Activated T-helper 1 cell treated with anti-CD3 and anti-CD28 coated beads, Interleukin-12 subunit alpha, Interleukin-12 subunit beta, Interleukin-2, Interleukin-4 antibody, amounts not matched to agents 30 ng/mL and 10 ng/mL and 1 ng/mL, durations not matched to agents 14 hours and 24 hours and 36 hours (primary cell): ENCODE measurements at regions of chr10 and their contacts with region 1.

Region 1: GRCh38 chr10:93376372-93377293 is 105.5 kb downstream of the MYOF start:
- DNase-seq: peak; percentile 46
- H3K4me3 Mint-ChIP-seq: no peak overlapping the region
- H3K27ac Mint-ChIP-seq: no peak overlapping the region
- H3K4me1 Mint-ChIP-seq: peaks cover 32% of the 10 kb centered on the region
- H3K27me3 Mint-ChIP-seq: no peaks in the 10 kb centered on the region

Region 2: GRCh38 chr10:92208736-92209327 is 1167.8 kb before region 1 on chr10:
- intact Hi-C with region 1: loop called (anchors 5 kb)
- DNase-seq: no peak
- H3K4me3 Mint-ChIP-seq: no peak overlapping the region
- H3K27ac Mint-ChIP-seq: no peak overlapping the region
- H3K4me1 Mint-ChIP-seq: peaks cover 20% of the 10 kb centered on the region
- H3K27me3 Mint-ChIP-seq: no peaks in the 10 kb centered on the region

Region 3: DNA sequence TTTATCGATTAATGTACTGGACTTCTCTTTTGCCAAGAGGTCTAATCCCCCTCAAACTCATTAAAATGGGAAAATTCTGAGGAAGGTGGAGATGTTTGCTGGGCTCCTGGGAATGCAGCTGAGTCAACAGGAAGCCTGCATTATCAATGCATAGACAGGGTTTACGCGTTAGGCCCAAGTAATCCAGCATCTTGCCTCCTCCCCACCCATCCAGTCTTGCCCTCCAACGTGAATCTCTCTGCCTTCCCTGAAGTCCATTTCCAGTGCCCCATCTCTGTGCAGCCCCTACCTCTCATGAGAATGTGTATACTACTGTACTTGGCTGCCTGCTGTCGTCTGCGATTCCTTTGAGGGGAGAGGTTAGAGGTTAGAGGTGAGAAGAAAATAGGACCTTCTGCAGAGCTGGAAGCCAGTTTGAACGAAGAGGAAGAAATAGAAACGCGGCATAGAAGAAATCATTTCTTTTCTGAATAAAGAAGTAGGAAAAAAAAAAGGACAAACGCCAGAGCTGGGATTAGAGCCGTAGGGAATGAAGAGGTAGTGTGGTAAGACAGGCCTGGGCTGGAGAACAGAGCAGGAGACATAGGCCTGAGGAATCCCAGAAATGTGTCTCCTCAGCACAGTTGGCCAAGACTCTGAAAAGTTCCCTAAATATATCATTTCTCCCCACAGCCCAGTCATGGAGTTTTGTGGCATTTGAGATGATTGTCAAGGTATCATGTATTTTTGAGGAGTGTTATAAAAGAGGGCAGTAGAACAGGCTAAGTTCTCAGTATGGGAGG is 29.9 kb after region 1 on chr10:
- intact Hi-C with region 1: no loop called
- DNase-seq: no peak
- H3K4me3 Mint-ChIP-seq: no peak overlapping the region
- H3K27ac Mint-ChIP-seq: no peak overlapping the region
- H3K4me1 Mint-ChIP-seq: peaks cover 13% of the 10 kb centered on the region
- H3K27me3 Mint-ChIP-seq: no peaks in the 10 kb centered on the region

Region 4: GRCh38 chr10:93482145-93482834 is 105.7 kb after region 1 on chr10 and contains the start of gene MYOF:
- intact Hi-C with region 1: loop called (anchors 1 kb)
- DNase-seq: peak; percentile 35
- H3K4me3 Mint-ChIP-seq: peak within 1 kb of the TSS; percentile 96
- H3K27ac Mint-ChIP-seq: peak within 1 kb of the TSS; percentile 93
- H3K4me1 Mint-ChIP-seq: peaks cover 19% of the 10 kb centered on the region
- H3K27me3 Mint-ChIP-seq: peaks cover 3% of the 10 kb centered on the region
- total RNA-seq, gene MYOF: 13.4 and 13.7 TPM in 2 replicates

Region 5: DNA sequence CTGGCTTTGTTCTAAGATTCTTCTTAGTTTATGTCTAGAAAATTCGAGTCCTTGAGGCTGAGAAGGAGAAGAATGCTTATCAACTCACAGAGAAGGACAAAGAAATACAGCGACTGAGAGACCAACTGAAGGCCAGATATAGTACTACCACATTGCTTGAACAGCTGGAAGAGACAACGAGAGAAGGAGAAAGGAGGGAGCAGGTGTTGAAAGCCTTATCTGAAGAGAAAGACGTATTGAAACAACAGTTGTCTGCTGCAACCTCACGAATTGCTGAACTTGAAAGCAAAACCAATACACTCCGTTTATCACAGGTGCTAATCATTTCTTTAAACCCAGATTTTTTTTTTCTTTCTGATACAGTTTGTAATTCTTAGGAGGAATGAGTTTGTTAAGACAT is 126.4 kb after region 1 on chr10:
- intact Hi-C with region 1: loop called (anchors 1 kb)
- DNase-seq: no peak
- H3K4me3 Mint-ChIP-seq: peak overlapping the region; percentile 76
- H3K27ac Mint-ChIP-seq: peak overlapping the region; percentile 91
- H3K4me1 Mint-ChIP-seq: peaks cover 67% of the 10 kb centered on the region
- H3K27me3 Mint-ChIP-seq: no peaks in the 10 kb centered on the region

Region 6: GRCh38 chr10:93702211-93703001 is 325.8 kb after region 1 on chr10 and contains the start of gene FRA10AC1:
- intact Hi-C with region 1: loop called (anchors 5 kb)
- DNase-seq: peak; percentile 86
- H3K4me3 Mint-ChIP-seq: no peak within 1 kb of the TSS
- H3K27ac Mint-ChIP-seq: no peak within 1 kb of the TSS
- H3K4me1 Mint-ChIP-seq: peaks cover 19% of the 10 kb centered on the region
- H3K27me3 Mint-ChIP-seq: no peaks in the 10 kb centered on the region
- total RNA-seq, gene FRA10AC1: 25.9 and 28.2 TPM in 2 replicates